Activated CD4-positive, alpha-beta memory T cell treated with anti-CD3 and anti-CD28 coated beads for 36 hours (primary cell): ENCODE measurements at regions of chr2 and their contacts with region 1.

Region 1: GRCh38 chr2:36246320-36246990 is 109.1 kb upstream of the CRIM1 start:
- DNase-seq: no peak
- H3K4me3 Mint-ChIP-seq: peak overlapping the region; percentile 57
- H3K27ac Mint-ChIP-seq: peak overlapping the region; percentile 89
- H3K4me1 Mint-ChIP-seq: peaks cover 63% of the 10 kb centered on the region
- H3K27me3 Mint-ChIP-seq: peaks cover 6% of the 10 kb centered on the region

Region 2: DNA sequence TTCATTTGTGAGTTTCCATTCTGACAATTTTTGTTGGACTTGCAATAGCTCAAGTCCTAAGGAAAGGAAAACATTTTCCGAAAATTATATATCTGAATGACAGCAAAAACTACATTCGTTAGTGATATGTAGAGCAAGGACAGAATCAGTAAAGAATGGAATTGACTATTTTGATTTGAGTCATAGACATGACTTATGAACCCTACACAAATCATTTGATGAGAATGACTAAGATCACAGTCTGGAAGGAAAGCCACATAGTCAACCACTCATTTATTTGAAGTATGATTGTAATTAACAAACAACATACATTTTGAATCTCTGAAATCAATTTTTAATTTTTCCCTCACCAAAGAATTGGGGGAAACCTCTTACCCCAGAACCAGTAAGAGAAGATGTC is 122.5 kb before region 1 on chr2:
- CTCF ChIA-PET with region 1: no interaction called
- POLR2A ChIA-PET with region 1: no interaction called
- intact Hi-C with region 1: loop called (anchors 1 kb)
- DNase-seq: no peak
- H3K4me3 Mint-ChIP-seq: no peak overlapping the region
- H3K27ac Mint-ChIP-seq: no peak overlapping the region
- H3K4me1 Mint-ChIP-seq: peaks cover 9% of the 10 kb centered on the region
- H3K27me3 Mint-ChIP-seq: peaks cover 35% of the 10 kb centered on the region

Region 3: DNA sequence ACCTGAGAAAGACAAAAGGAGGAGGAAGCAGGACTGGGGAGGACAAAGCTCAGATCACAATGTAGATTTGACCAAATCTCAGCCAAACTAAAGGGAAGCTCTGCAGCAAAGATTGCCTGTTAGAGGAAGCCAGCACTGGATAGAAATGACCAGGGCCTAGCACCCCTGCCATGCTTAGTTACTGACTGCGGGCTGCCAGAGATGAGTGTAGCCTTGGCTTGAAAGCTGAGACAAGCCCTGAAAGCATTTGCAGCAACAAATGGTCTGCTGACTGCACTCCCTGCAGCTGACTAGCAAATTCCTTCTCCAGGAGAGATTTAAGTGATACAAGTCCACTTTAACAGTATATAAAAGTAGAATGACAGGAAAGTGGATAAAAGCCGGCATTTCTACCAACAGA is 31.8 kb before region 1 on chr2:
- CTCF ChIA-PET with region 1: no interaction called
- POLR2A ChIA-PET with region 1: no interaction called
- intact Hi-C with region 1: no loop called
- DNase-seq: no peak
- H3K4me3 Mint-ChIP-seq: no peak overlapping the region
- H3K27ac Mint-ChIP-seq: no peak overlapping the region
- H3K4me1 Mint-ChIP-seq: no peaks in the 10 kb centered on the region
- H3K27me3 Mint-ChIP-seq: peaks cover 1% of the 10 kb centered on the region

Region 4: DNA sequence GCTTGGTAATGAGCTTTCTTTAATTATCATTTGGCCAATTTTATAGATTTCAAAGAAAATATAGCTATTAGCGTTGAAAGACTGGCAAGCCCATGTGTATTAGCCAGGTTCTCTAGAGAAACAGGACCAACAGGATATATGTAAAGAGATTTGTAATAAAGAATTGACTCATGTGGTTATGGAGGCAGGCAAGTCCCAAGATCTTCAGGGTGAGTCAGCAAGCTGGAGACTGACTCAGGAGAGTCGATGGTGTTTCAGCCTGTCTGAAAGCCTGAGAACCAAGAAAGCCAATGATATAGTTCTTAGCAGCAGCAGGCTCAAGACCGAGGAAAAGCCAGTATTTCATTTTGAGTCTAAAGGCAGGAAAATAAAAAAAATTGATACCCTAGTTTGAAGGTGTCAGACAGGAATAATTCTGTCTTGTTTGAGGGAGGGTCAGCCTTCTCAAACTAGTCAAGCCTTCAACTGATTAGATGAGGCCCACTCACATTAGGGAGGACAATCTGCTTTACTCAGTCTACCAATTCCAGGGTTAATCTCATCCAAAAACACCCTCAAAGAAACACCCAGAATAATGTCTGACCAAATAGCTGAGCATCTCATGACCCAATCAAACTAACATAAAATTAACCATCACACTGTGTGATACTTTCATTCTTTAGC is 30.8 kb after region 1 on chr2:
- CTCF ChIA-PET with region 1: no interaction called
- POLR2A ChIA-PET with region 1: no interaction called
- intact Hi-C with region 1: loop called (anchors 1 kb)
- DNase-seq: peak; percentile 57
- H3K4me3 Mint-ChIP-seq: no peak overlapping the region
- H3K27ac Mint-ChIP-seq: no peak overlapping the region
- H3K4me1 Mint-ChIP-seq: peaks cover 3% of the 10 kb centered on the region
- H3K27me3 Mint-ChIP-seq: no peaks in the 10 kb centered on the region

Region 5: DNA sequence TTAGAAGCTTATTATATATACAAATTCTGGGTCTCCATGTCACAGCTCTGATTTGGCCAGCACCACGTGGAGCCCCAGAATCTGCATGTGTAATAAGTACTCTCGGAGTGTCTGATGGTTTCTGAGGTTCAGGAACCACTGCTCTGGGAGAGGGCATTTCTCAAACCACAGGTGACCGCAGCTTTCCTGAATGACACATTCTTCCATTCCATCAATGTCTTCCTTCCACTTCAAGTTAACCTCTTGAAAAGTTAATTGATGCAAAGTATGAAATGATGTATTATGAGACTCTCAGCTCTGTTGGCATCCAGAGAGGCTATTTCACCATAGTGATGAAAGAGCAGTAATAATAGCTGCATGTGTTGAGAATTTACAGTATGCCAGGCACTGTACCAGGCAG is 47.8 kb after region 1 on chr2:
- CTCF ChIA-PET with region 1: interaction called, 3 read pairs
- POLR2A ChIA-PET with region 1: no interaction called
- intact Hi-C with region 1: loop called (anchors 1 kb)
- DNase-seq: peak; percentile 55
- H3K4me3 Mint-ChIP-seq: no peak overlapping the region
- H3K27ac Mint-ChIP-seq: no peak overlapping the region
- H3K4me1 Mint-ChIP-seq: peaks cover 2% of the 10 kb centered on the region
- H3K27me3 Mint-ChIP-seq: no peaks in the 10 kb centered on the region

Region 6: DNA sequence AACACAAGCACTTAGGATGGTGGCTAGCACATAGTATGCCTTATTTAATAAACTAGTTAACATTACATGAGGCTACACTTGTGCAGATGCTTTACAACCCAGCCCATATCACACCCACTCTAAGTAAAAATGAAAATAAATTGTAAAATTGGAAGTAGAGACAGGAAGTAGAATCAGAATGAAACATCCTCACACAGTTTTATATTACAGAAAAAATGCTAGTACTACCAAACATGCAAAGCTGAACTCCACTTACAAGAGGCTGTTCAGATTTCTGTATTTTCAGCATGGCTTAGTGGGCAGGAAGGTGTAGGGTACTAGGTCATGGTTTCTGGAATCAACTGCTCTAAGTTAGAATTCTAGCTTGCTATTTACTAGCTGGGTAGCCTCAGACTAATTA is 90.9 kb after region 1 on chr2:
- CTCF ChIA-PET with region 1: no interaction called
- POLR2A ChIA-PET with region 1: interaction called, 3 read pairs
- intact Hi-C with region 1: loop called (anchors 1 kb)
- DNase-seq: no peak
- H3K4me3 Mint-ChIP-seq: no peak overlapping the region
- H3K27ac Mint-ChIP-seq: no peak overlapping the region
- H3K4me1 Mint-ChIP-seq: peaks cover 4% of the 10 kb centered on the region
- H3K27me3 Mint-ChIP-seq: peaks cover 1% of the 10 kb centered on the region

Region 7: DNA sequence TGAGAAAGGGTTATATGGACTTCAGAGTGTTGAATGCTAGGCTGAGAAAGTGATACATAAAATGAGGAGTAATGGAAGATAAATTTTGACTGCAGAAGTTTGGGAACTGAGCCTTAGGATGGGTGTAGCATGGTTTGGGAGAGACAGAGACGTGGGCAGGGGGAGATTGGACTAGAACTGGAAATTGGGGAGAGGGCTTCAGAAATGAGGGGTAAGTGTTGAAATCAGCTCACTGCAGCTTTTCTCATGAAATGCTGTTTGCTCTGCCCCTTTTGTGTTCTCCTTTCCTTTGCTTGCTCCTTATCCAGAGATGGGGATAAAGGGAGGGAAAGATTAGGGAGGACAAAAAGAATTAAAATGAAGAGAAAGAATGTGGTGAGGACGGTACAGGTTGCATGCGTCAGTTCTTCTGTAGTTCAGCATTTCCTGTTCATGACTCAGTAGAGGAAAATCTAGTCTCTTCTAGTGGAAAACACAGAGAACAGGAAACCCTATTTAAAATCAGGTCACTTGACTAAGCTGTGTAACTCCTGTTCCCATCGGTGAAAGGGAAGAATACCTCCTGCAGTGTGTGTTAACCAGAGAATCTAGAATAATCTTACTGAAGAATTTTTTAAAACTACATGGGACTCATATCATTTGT is 214.7 kb after region 1 on chr2:
- CTCF ChIA-PET with region 1: no interaction called
- POLR2A ChIA-PET with region 1: no interaction called
- intact Hi-C with region 1: loop called (anchors 1 kb)
- DNase-seq: no peak
- H3K4me3 Mint-ChIP-seq: no peak overlapping the region
- H3K27ac Mint-ChIP-seq: no peak overlapping the region
- H3K4me1 Mint-ChIP-seq: no peaks in the 10 kb centered on the region
- H3K27me3 Mint-ChIP-seq: no peaks in the 10 kb centered on the region

Region 8: GRCh38 chr2:36717603-36718266 is 471.3 kb after region 1 on chr2:
- CTCF ChIA-PET with region 1: no interaction called
- POLR2A ChIA-PET with region 1: no interaction called
- intact Hi-C with region 1: no loop called
- DNase-seq: no peak
- H3K4me3 Mint-ChIP-seq: no peak overlapping the region
- H3K27ac Mint-ChIP-seq: no peak overlapping the region
- H3K4me1 Mint-ChIP-seq: no peaks in the 10 kb centered on the region
- H3K27me3 Mint-ChIP-seq: peaks cover 2% of the 10 kb centered on the region